Ascending aorta (tissue), 2 donors: ENCODE measurements at regions of chr4 and their contacts with region 1.

Region 1: GRCh38 chr4:113435893-113436292 is 325.6 kb downstream of the CAMK2D start:
- DNase-seq: peak in 1 of 2 donors; percentile 80
- H3K4me3 ChIP-seq: peak overlapping the region in 1 of 2 donors; percentile 1
- H3K27ac ChIP-seq: peak overlapping the region; percentile 51 to 64
- H3K4me1 ChIP-seq: peaks cover 8 to 22% of the 10 kb centered on the region in 2 donors
- H3K27me3 ChIP-seq: no peaks in the 10 kb centered on the region
- CTCF ChIP-seq: no peak

Region 2: GRCh38 chr4:113368056-113368455 is 67.8 kb before region 1 on chr4:
- intact Hi-C with region 1: no loop called
- DNase-seq: no peak
- H3K4me3 ChIP-seq: no peak overlapping the region
- H3K27ac ChIP-seq: no peak overlapping the region
- H3K4me1 ChIP-seq: no peaks in the 10 kb centered on the region
- H3K27me3 ChIP-seq: no peaks in the 10 kb centered on the region
- CTCF ChIP-seq: no peak

Region 3: DNA sequence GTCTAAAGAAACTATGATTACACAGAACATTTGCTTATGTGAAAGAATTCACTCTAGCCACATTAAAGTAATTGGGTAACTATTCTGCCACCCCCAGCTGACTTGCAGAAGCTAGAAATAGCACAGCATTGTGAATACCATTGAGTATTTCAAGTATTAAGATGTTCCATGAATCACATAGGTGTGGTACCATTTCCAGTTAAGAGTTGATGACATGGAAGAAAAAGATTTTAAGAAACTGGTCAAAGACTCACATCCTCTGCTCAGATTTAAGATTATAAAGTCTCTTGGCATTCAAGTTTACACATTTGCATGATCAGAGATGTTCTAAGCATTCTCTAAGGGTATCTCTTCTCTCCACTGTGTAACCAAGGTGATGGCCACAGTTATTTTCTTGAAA is 38.1 kb after region 1 on chr4:
- intact Hi-C with region 1: loop called (anchors 5 kb)
- DNase-seq: no peak
- H3K4me3 ChIP-seq: no peak overlapping the region
- H3K27ac ChIP-seq: no peak overlapping the region
- H3K4me1 ChIP-seq: peaks cover 8 to 15% of the 10 kb centered on the region in 2 donors
- H3K27me3 ChIP-seq: no peaks in the 10 kb centered on the region
- CTCF ChIP-seq: no peak

Region 4: DNA sequence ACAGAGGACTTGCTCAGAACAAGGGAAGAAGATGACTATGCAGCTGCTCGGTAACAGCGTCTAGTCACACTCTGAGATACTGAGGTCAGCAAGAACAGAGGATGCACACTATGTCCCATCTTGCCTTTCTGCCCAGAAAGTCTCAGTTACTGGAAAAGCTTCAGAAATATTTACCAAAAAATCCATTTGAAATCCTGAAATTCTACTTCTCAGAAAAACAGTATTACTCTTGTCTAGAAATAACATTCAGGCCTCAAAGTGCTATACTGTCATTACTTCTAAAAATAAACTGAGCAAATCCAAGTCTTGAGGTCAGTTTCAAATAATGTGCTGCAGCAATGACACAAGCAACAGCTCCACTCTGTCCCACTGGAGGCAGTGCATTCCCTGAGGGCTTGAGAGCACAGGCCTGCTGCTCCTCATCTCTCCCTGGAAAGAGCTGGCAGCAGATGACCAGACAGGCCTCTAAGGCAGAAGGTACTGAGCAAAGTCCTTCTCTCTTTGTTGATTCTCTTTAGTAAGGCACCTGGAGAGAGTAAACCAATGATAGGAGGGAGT is 248.7 kb after region 1 on chr4:
- intact Hi-C with region 1: loop called (anchors 2 kb)
- DNase-seq: peak; percentile 17 to 85
- H3K4me3 ChIP-seq: no peak overlapping the region
- H3K27ac ChIP-seq: peak overlapping the region; percentile 38 to 90
- H3K4me1 ChIP-seq: peaks cover 16 to 19% of the 10 kb centered on the region in 2 donors
- H3K27me3 ChIP-seq: no peaks in the 10 kb centered on the region
- CTCF ChIP-seq: peak; percentile 45 to 60 (median 55)